ENCODE measurements at regions of chr6 and their contacts with region 1.

Region 1: DNA sequence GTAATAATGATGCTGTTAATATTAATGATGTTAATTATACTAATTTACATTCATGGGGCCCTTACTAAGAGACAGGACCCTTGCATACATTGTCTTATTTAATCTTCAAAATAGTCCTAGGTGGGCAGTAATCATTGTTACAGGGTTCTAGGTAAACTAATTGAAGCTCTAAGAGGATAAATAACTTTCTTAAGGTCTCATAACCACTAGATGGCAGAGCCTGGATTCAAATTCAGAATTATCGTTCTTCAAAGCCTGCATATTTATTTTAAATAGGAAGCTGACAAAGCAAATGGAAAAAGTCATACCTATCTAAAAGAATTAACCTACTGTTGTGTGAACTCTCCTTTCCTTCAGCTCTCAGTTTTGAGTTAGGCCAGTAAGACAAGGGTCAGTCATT is 23.5 kb downstream of the PTCHD4 start:
- DNase-seq: no peak
- ATAC-seq: 0 out of 3 replicates have a peak, but pooled peaks have one; percentile 46
- H3K4me3 ChIP-seq: no peak overlapping the region
- H3K27ac ChIP-seq: no peak overlapping the region
- H3K4me1 ChIP-seq: no peaks in the 10 kb centered on the region
- H3K27me3 ChIP-seq: no peaks in the 10 kb centered on the region
- CTCF ChIP-seq: peak in 2 of 3 experiments; percentile 7 to 25; a peak in 2 of 6 replicates
- EP300 ChIP-seq: no peak
- POLR2A ChIP-seq: no peak
- RAD21 ChIP-seq: peak; percentile 57

Region 2: DNA sequence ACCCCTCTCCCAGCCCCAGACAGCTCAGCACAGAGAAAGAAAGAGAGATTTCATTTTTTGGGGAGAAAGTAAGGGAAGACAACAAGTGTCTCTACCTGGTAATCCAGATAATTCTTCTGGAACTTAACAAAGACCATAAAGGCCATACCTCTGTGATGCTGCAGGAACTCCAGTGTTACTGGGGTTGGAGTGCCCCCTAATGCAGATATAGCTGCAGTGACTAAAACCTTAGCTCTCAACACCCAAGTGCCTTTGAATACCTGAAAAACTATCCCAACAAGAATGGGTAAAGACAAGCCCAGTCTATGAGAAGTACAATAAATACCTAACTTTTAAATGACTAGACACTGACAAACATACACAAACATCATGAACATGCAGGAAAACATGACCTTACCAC is 388.8 kb after region 1 on chr6:
- CTCF ChIA-PET with region 1: interaction called, 15 read pairs
- POLR2A ChIA-PET with region 1: no interaction called
- RAD21 ChIA-PET with region 1: interaction called, 9 read pairs
- SMC1A ChIA-PET with region 1: interaction called, 3 read pairs
- in situ Hi-C with region 1: no loop called
- intact Hi-C with region 1: no loop called
- DNase-seq: no peak
- ATAC-seq: peak; percentile 40; the same call in 1 of the 3 replicates
- H3K4me3 ChIP-seq: no peak overlapping the region
- H3K27ac ChIP-seq: no peak overlapping the region
- H3K4me1 ChIP-seq: no peaks in the 10 kb centered on the region
- H3K27me3 ChIP-seq: no peaks in the 10 kb centered on the region
- CTCF ChIP-seq: peak in 1 of 3 experiments; percentile 34; a peak in 1 of 6 replicates
- EP300 ChIP-seq: no peak
- POLR2A ChIP-seq: no peak
- RAD21 ChIP-seq: peak; percentile 23; the same call in 1 of the 2 replicates

Region 3: GRCh38 chr6:48765352-48765961 is 678.0 kb after region 1 on chr6:
- CTCF ChIA-PET with region 1: interaction called, 4 read pairs
- POLR2A ChIA-PET with region 1: no interaction called
- RAD21 ChIA-PET with region 1: interaction called, 4 read pairs
- SMC1A ChIA-PET with region 1: interaction called, 6 read pairs
- in situ Hi-C with region 1: no loop called
- intact Hi-C with region 1: loop called (anchors 10 kb)
- DNase-seq: no peak
- ATAC-seq: peak; percentile 73
- H3K4me3 ChIP-seq: no peak overlapping the region
- H3K27ac ChIP-seq: no peak overlapping the region
- H3K4me1 ChIP-seq: no peaks in the 10 kb centered on the region
- H3K27me3 ChIP-seq: no peaks in the 10 kb centered on the region
- CTCF ChIP-seq: peak; percentile 16 to 42 (median 34); a peak in 4 of 6 replicates
- EP300 ChIP-seq: no peak
- POLR2A ChIP-seq: no peak
- RAD21 ChIP-seq: peak; percentile 67